ENCODE measurements at regions of chr4 and their contacts with region 1.

Region 1: GRCh38 chr4:56910172-56910967 is 2.7 kb downstream of the REST start:
- DNase-seq: no peak
- ATAC-seq: no peak
- H3K4me3 ChIP-seq: peak overlapping the region; percentile 99
- H3K27ac ChIP-seq: peak overlapping the region; percentile 36
- H3K4me1 ChIP-seq: peaks cover 12% of the 10 kb centered on the region
- H3K27me3 ChIP-seq: no peaks in the 10 kb centered on the region

Region 2: GRCh38 chr4:56752991-56753390 is 157.4 kb before region 1 on chr4:
- intact Hi-C with region 1: no loop called
- DNase-seq: no peak
- ATAC-seq: no peak
- H3K4me3 ChIP-seq: no peak overlapping the region
- H3K27ac ChIP-seq: no peak overlapping the region
- H3K4me1 ChIP-seq: no peaks in the 10 kb centered on the region
- H3K27me3 ChIP-seq: no peaks in the 10 kb centered on the region

Region 3: DNA sequence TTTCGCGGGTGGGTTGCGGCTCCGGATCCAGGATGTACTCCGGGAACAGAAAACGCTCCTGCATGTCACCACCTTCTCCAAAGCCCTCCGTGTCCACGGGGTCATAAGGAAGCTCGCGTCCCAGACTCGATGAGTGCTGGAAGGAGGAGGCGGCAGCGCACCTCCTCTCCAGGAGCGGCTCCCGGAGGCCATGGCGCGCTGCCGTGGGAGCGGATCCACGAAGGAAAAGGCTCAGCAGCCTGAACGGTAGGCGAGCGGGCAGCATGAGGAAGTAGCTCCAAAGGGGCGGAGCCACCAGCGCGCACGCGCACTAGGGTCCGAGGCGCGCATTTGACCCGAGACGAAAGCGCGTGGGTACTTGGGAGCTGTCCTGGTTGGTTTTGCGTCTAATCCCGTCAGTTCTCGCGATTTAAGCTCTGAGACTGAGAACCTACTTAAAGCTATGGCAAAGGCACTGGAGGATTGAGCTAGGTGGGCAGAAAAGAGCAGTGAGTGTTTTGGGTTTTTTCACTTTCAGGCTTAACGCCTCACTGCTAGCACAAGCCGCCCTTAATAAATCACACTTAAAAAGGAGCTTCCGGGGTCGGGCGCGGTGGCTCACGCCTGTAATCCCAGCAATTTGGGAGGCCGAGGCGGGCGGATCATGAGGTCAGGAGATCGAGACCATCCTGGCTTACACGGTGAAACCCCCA is 67.1 kb after region 1 on chr4 and contains the start of gene NOA1:
- intact Hi-C with region 1: loop called in 1 of 4 experiments (anchors 10 kb)
- DNase-seq: peak; percentile 97 to 99 (median 99)
- ATAC-seq: peak; percentile 92
- H3K4me3 ChIP-seq: peak within 1 kb of the TSS; percentile 99
- H3K27ac ChIP-seq: peak within 1 kb of the TSS; percentile 100
- H3K4me1 ChIP-seq: peaks cover 9% of the 10 kb centered on the region
- H3K27me3 ChIP-seq: no peaks in the 10 kb centered on the region
- total RNA-seq, gene NOA1: 8.4 to 12.5 (median 10.5) TPM

Measured in right cardiac atrium (tissue), 5 donors.